ENCODE measurements at regions of chrX and their contacts with region 1.

Region 1: GRCh38 chrX:20452487-20452886 is 185.8 kb upstream of the RPS6KA3 start:
- DNase-seq: no peak
- ATAC-seq: no peak
- H3K4me3 ChIP-seq: no peak overlapping the region
- H3K4me3 Mint-ChIP-seq: peak overlapping the region in 1 of 10 donors; percentile 55
- H3K27ac ChIP-seq: no peak overlapping the region
- H3K27ac Mint-ChIP-seq: peak overlapping the region in 2 of 9 donors; percentile 35 to 92
- H3K4me1 ChIP-seq: peaks cover 0 to 16% of the 10 kb centered on the region in 2 donors
- H3K4me1 Mint-ChIP-seq: peaks cover 0 to 50% (median 6%) of the 10 kb centered on the region in 7 donors
- H3K27me3 ChIP-seq: no peaks in the 10 kb centered on the region
- H3K27me3 Mint-ChIP-seq: peaks cover 0 to 2% (median 0%) of the 10 kb centered on the region in 5 donors

Region 2: GRCh38 chrX:20437683-20438082 is 14.8 kb before region 1 on chrX:
- CTCF ChIA-PET with region 1: no interaction called
- POLR2A ChIA-PET with region 1: no interaction called
- intact Hi-C with region 1: no loop called
- DNase-seq: peak in 4 of 9 donors; percentile 22 to 50 (median 41)
- ATAC-seq: peak; percentile 72
- H3K4me3 ChIP-seq: peak overlapping the region; percentile 43
- H3K4me3 Mint-ChIP-seq: peak overlapping the region; percentile 45 to 84 (median 74)
- H3K27ac ChIP-seq: no peak overlapping the region
- H3K27ac Mint-ChIP-seq: peak overlapping the region; percentile 54 to 97 (median 89)
- H3K4me1 ChIP-seq: peaks cover 40 to 50% of the 10 kb centered on the region in 2 donors
- H3K4me1 Mint-ChIP-seq: peaks cover 31 to 81% (median 69%) of the 10 kb centered on the region in 7 donors
- H3K27me3 ChIP-seq: no peaks in the 10 kb centered on the region
- H3K27me3 Mint-ChIP-seq: no peaks in the 10 kb centered on the region

Region 3: GRCh38 chrX:20500171-20500865 is 47.8 kb after region 1 on chrX:
- CTCF ChIA-PET with region 1: no interaction called
- POLR2A ChIA-PET with region 1: no interaction called
- intact Hi-C with region 1: loop called in 1 of 2 experiments (anchors 5 kb)
- DNase-seq: peak in 3 of 9 donors; percentile 3 to 15 (median 7)
- ATAC-seq: peak; percentile 32
- H3K4me3 ChIP-seq: no peak overlapping the region
- H3K4me3 Mint-ChIP-seq: peak overlapping the region in 3 of 10 donors; percentile 12 to 75 (median 56)
- H3K27ac ChIP-seq: no peak overlapping the region
- H3K27ac Mint-ChIP-seq: peak overlapping the region in 1 of 9 donors; percentile 41
- H3K4me1 ChIP-seq: no peaks in the 10 kb centered on the region
- H3K4me1 Mint-ChIP-seq: peaks cover 4 to 25% (median 11%) of the 10 kb centered on the region in 7 donors
- H3K27me3 ChIP-seq: no peaks in the 10 kb centered on the region
- H3K27me3 Mint-ChIP-seq: peaks cover 0 to 48% (median 4%) of the 10 kb centered on the region in 5 donors

Region 4: DNA sequence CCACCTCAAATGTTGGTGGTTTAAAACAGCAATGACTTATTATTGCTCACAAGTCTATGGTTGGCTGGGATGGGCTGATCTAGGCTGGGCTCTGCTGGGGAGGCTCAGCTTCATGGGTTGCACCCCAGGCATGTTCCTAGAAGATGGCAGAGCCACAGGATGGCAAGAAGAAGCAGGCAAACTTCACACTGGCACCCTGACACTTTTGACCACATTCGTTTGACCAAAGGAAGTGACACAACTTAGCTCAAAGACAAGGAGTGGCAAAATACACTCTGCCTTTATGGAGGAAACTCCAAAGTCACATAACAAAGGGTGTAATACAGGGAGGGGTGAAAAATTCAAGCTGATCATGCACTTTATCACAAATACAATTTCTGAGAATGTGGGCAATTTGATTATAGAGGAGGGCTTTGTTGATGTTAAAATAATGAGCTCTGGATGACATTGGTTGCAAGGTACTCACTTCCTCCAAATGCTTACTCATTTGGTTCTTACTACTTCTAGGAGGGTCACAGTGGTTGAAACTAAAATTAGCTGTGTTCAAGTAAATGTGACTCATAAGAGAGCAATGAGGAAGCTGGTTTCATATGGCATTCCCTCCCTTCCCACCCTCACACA is 63.5 kb after region 1 on chrX:
- CTCF ChIA-PET with region 1: no interaction called
- POLR2A ChIA-PET with region 1: no interaction called
- intact Hi-C with region 1: loop called in 1 of 2 experiments (anchors 5 kb)
- DNase-seq: peak in 1 of 9 donors; percentile 27
- ATAC-seq: peak; percentile 85
- H3K4me3 ChIP-seq: no peak overlapping the region
- H3K4me3 Mint-ChIP-seq: peak overlapping the region in 1 of 10 donors; percentile 65
- H3K27ac ChIP-seq: no peak overlapping the region
- H3K27ac Mint-ChIP-seq: peak overlapping the region in 1 of 9 donors; percentile 89
- H3K4me1 ChIP-seq: no peaks in the 10 kb centered on the region
- H3K4me1 Mint-ChIP-seq: peaks cover 0 to 39% (median 0%) of the 10 kb centered on the region in 7 donors
- H3K27me3 ChIP-seq: no peaks in the 10 kb centered on the region
- H3K27me3 Mint-ChIP-seq: peaks cover 0 to 23% (median 0%) of the 10 kb centered on the region in 5 donors